Activated B cell treated with CpG ODN at 0.5 μM for 24 hours (primary cell): ENCODE measurements at regions of chr1 and their contacts with region 1.

Region 1: DNA sequence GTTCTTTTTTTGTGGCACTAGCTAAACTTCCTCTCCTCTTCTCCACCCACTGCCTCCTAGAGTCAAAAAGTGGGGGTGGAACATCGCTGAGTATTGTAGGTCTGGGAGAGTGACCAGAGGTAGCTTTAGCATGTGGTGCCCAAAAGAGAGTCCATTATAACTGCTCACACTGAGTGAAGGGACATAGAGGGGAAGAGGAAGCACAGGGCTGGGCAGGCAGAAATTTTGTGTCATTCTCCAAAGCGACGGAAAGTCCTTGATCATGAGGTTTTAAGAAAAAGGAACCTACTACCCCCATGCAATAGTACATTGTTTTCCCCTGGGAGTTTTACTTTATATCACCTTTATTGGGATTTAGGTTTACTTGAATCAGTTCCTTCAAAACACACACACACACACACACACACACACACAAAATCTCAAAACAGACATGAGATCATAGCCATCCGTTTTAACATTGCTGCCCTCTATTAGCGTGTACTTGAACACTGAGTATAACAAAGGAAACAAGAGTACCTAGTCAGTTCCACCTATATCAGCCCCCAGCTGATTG is 4.1 kb downstream of the CD84 start:
- DNase-seq: peak; percentile 28
- ATAC-seq: peak; percentile 78
- H3K4me3 Mint-ChIP-seq: peak overlapping the region; percentile 91
- H3K27ac Mint-ChIP-seq: peak overlapping the region; percentile 91
- H3K4me1 Mint-ChIP-seq: peaks cover 95% of the 10 kb centered on the region
- H3K27me3 Mint-ChIP-seq: no peaks in the 10 kb centered on the region
- CTCF ChIP-seq: no peak

Region 2: DNA sequence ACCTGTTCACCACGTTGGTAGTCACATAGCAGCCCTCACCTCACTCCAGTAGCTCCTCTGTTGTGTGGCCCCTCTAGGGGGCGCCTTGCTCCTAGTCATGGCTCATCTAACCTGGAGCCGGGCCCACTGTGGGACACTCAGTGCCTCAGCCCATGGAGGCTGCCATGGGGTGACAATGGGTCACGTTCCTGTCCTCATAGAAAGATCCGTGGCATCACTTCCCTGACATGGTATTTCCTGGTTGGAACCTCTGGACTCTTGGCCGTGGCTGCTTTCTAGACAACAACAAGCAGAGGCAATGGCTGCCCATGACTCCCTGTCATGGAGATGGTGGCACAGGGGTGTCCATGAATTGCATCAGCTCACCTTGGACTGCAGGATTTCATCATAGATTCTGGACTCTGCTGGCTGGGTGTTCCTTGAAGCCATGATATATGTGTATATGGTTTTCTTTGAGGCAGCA is 24.6 kb before region 1 on chr1:
- CTCF ChIA-PET with region 1: interaction called, 5 read pairs
- POLR2A ChIA-PET with region 1: interaction called, 56 read pairs
- intact Hi-C with region 1: loop called (anchors 1 kb)
- DNase-seq: no peak
- ATAC-seq: no peak
- H3K4me3 Mint-ChIP-seq: no peak overlapping the region
- H3K27ac Mint-ChIP-seq: peak overlapping the region; percentile 90
- H3K4me1 Mint-ChIP-seq: peaks cover 86% of the 10 kb centered on the region
- H3K27me3 Mint-ChIP-seq: no peaks in the 10 kb centered on the region
- CTCF ChIP-seq: no peak

Region 3: DNA sequence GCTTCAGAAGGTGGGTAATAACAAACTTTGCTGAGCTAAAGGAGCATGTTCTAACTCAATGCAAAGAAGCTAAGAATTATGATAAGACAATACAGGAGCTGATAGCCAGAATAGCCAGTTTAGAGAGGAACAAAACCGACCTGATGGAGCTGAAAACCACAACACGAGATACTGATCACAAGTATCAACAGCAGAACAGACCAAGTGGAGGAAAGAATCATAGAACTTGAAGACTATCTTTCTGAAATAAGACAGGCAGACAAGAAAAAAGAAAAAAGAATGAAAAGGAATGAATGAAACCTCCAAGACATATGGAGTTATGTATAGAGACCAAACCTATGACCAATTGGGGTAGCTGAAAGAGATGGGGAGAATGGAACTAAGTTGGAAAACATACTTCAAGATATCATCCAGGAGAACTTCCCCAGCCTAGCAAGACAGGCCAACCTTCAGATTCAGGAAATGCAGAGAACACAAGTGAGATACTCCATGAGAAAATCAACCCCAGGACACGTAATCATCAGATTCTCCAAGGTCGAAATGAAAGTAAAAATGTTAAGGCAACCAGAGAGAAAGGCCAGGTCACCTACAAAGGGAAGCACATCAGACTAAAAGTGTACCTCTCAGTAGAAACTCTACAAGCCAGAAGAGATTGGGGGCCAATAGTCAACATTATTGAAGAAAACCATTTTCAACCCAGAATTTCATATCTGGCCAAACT is 16.4 kb before region 1 on chr1:
- CTCF ChIA-PET with region 1: no interaction called
- POLR2A ChIA-PET with region 1: interaction called, 4 read pairs
- intact Hi-C with region 1: loop called (anchors 2 kb)
- DNase-seq: no peak
- ATAC-seq: no peak
- H3K4me3 Mint-ChIP-seq: no peak overlapping the region
- H3K27ac Mint-ChIP-seq: peak overlapping the region; percentile 24
- H3K4me1 Mint-ChIP-seq: peaks cover 49% of the 10 kb centered on the region
- H3K27me3 Mint-ChIP-seq: no peaks in the 10 kb centered on the region
- CTCF ChIP-seq: no peak